ENCODE measurements at regions of chr6 and their contacts with region 1.

Region 1: DNA sequence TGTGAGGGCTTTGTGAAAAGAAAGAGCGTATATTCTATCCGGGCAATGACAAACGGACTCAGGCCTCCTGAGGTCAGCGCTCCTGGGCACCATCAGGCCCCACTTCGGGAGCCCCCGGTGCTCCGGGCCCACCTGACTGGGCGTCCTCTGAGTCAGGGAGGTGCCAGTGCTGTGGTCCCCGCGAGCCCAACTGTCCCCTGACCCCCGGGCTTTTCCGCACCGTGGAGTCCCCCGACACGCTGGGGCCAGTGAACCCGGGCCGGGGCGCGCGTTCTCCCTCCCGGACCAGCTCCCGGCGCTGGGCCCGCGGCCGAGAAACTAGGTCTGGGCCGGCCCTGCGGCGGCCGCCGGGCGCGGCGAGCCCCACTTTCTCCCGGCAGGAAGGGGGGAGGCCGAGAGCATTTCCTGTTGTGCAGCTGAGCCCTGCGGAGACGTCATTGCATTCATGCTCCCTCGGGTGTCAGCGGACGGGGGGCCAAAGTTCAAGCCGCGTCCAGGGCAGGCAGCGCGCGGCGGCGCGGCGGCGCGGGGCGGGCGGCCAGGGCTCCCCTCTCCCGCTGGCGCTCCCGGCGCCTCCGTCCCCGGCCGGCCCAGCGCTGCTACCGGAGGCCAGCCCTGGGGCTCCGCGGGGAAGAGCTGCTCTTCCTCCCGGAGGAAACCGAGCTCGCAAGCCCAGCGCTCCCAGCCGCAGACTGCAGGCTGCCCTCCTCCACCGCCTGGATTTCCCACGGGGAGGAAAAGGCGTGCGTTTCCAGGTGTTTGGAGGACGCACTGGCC is 18.3 kb downstream of the HIVEP2 start:
- DNase-seq: peak; percentile 90
- ATAC-seq: peak; percentile 90

Region 2: DNA sequence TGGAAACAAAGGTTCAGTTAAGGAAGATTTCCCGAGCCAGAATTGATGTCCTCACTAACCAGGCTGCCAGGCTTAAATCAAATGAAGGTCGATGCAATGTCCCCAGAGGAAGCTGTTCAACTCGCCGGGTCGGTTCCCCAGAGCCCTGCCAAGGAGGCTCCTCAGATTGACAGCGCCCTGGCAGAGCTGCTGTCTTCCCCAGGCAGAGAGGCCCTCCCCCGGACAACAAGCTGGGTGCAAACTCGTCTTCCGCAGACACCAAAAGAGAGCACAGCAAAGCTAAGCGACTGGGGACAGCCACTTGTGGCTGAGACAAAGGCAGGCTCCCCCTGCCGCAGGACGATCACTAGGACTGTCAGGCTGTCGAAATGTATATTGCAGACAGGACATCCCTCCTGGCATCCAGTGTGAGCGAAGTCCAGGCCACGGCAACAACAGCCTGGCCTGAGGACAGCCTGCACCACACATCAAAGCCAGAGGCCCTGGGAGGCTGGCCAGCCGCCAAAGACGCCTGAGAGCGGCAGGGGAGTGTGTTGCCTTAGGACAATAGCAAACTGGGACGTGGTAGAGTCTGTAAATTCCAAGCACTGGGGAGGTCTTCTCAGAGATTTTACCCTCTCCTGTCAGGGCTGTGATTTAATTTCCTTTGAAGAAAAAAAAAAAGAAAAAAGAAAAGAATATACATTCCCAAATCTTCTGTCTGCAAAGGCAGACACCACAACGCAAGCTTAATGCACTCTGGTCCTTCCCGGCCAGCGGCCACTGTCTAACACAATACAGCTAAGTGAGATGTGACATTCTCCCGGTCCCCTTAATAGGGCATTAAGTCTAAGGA is 80.8 kb before region 1 on chr6:
- intact Hi-C with region 1: loop called (anchors 5 kb)
- DNase-seq: peak; percentile 95
- ATAC-seq: peak; percentile 95

Region 3: GRCh38 chr6:142960098-142960497 is 33.4 kb after region 1 on chr6:
- intact Hi-C with region 1: no loop called
- DNase-seq: no peak
- ATAC-seq: no peak

Measured in Right ventricle myocardium inferior (tissue), 1 donor.